ENCODE measurements at regions of chr1 and their contacts with region 1.

Region 1: GRCh38 chr1:77126307-77126706 is 92.9 kb downstream of the PIGK start:
- DNase-seq: peak; percentile 79
- ATAC-seq: peak; percentile 80
- H3K4me3 ChIP-seq: no peak overlapping the region
- H3K27ac ChIP-seq: no peak overlapping the region
- H3K4me1 ChIP-seq: 0 out of 2 replicates have a peak, but pooled peaks cover 4% of the 10 kb centered on the region
- H3K27me3 ChIP-seq: no peaks in the 10 kb centered on the region
- CTCF ChIP-seq: peak; percentile 88

Region 2: GRCh38 chr1:76154206-76154956 is 971.9 kb before region 1 on chr1:
- CTCF ChIA-PET with region 1: no interaction called
- POLR2A ChIA-PET with region 1: no interaction called
- intact Hi-C with region 1: loop called (anchors 1 kb)
- DNase-seq: peak; percentile 80
- ATAC-seq: peak; percentile 96
- H3K4me3 ChIP-seq: peak overlapping the region; percentile 65
- H3K27ac ChIP-seq: no peak overlapping the region
- H3K4me1 ChIP-seq: peaks cover 5% of the 10 kb centered on the region; the same call in 1 of the 2 replicates
- H3K27me3 ChIP-seq: peaks cover 40% of the 10 kb centered on the region
- CTCF ChIP-seq: peak; percentile 96

Region 3: DNA sequence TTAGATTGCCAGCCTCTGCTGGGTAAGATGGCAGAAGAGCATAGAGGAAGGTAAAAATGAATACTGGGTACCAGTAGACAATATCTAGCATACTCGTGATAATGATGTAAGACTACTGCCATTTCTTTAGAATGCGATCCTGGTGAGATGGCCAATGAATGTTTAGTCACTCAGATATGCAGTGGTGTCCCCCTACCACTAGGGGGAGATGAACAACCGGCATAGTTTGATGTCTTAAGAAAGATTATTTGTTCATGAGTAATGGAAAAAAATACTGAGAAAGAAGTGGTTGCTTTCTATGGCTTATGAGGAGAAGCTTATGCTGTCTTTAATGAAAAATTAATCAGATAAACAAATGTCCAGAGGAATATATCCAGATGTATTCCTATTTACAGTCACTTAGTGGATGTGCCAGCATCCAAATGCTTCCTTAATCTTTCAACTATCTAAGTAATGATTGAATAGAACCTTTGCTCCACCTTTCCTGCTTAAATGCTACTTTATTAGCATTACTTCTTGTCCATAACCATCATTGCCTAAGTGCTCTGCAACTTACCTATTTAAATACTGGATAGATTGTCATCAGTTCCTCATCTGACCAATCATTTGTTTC is 795.2 kb before region 1 on chr1:
- CTCF ChIA-PET with region 1: interaction called, 3 read pairs
- POLR2A ChIA-PET with region 1: no interaction called
- intact Hi-C with region 1: loop called (anchors 1 kb)
- DNase-seq: peak; percentile 78
- ATAC-seq: peak; percentile 78
- H3K4me3 ChIP-seq: no peak overlapping the region
- H3K27ac ChIP-seq: no peak overlapping the region
- H3K4me1 ChIP-seq: no peaks in the 10 kb centered on the region
- H3K27me3 ChIP-seq: no peaks in the 10 kb centered on the region
- CTCF ChIP-seq: peak; percentile 94

Region 4: GRCh38 chr1:76901158-76901767 is 225.0 kb before region 1 on chr1:
- CTCF ChIA-PET with region 1: no interaction called
- POLR2A ChIA-PET with region 1: no interaction called
- intact Hi-C with region 1: loop called (anchors 1 kb)
- DNase-seq: peak; percentile 76
- ATAC-seq: peak; percentile 88
- H3K4me3 ChIP-seq: no peak overlapping the region
- H3K27ac ChIP-seq: no peak overlapping the region
- H3K4me1 ChIP-seq: no peaks in the 10 kb centered on the region
- H3K27me3 ChIP-seq: no peaks in the 10 kb centered on the region
- CTCF ChIP-seq: peak; percentile 95

Region 5: DNA sequence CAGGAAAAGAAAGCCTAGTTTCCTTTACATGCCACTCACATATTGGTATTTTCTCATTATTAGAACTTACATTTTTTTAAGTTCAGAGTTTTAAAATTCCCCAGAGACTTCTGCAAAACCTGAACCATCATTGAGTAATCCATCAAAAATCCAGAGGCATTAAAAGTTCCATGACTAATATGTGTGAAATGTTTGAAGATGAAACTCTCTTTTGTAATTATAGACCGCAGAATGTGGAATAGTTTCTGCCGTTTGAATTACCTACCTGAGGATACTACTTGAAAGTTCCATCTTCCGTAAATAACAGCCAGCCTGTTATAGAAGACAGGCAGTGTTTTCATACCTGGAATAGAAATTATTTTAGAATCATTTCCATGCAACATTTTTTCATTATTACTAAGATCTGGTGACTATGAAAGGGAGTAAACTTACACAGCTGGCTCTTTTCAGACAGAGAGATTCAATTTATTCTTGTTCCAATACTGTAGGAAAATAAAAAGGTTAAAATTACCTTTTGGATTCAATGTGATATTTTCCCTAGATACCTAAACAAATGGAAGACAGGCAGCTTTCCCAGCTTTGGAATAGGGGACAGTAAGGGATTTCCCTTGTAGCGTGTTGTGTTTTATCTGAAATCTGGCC is 127.6 kb before region 1 on chr1:
- CTCF ChIA-PET with region 1: no interaction called
- POLR2A ChIA-PET with region 1: no interaction called
- intact Hi-C with region 1: loop called (anchors 2 kb)
- DNase-seq: peak; percentile 96
- ATAC-seq: peak; percentile 98
- H3K4me3 ChIP-seq: 0 out of 2 replicates have a peak overlapping the region, but pooled peaks have one; percentile 6
- H3K27ac ChIP-seq: peak overlapping the region; percentile 88
- H3K4me1 ChIP-seq: peaks cover 26% of the 10 kb centered on the region
- H3K27me3 ChIP-seq: no peaks in the 10 kb centered on the region
- CTCF ChIP-seq: no peak

Region 6: DNA sequence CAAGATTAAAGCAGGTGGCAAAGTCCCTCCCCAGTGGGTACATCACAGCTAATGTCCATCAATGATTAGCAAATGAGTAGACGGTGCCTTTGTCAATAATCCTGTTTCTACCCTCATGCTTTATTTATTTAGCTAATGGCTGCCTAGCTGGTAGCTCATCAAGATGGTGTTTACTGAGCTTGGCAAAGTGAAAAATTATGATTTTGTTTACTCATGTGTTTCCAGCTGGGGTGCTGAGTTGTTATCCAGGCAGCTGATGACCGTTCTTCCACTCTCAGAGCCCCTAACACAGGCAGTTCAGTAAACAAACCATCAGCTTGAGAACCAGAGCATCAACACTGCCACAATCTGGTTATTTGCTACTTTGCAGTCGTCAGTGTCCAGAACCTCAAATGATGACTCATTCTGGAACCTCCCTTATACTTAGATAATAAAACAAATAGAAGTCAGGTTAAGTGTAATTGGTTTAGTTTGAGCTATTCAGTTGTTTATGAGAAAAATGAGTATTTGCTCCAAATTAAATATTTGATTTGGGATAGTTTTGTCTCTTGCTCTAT is 95.1 kb before region 1 on chr1:
- CTCF ChIA-PET with region 1: interaction called, 3 read pairs
- POLR2A ChIA-PET with region 1: no interaction called
- intact Hi-C with region 1: loop called (anchors 2 kb)
- DNase-seq: peak; percentile 87
- ATAC-seq: peak; percentile 89
- H3K4me3 ChIP-seq: no peak overlapping the region
- H3K27ac ChIP-seq: peak overlapping the region; percentile 74
- H3K4me1 ChIP-seq: peaks cover 20% of the 10 kb centered on the region
- H3K27me3 ChIP-seq: no peaks in the 10 kb centered on the region
- CTCF ChIP-seq: peak; percentile 62

Region 7: DNA sequence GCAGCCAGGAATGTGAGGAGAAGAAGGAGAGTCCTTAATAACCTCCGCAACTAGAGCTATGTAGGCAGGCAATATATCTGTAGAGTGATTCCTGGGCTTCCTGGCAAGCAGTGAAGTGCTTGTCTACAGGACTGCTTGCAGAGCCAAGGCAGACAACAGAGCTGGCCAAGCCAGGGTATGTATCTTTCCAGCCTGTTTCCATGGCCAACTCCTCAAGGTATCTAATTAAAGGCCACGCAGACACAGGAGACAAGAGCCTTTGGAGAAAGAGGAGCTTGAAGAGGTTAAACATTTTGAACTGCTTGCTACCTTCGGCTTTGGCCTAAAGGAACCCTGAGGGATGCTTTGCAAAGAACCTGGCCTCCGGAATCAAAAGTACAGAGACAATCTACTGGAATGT is 44.5 kb before region 1 on chr1:
- CTCF ChIA-PET with region 1: no interaction called
- POLR2A ChIA-PET with region 1: no interaction called
- intact Hi-C with region 1: no loop called
- DNase-seq: no peak
- ATAC-seq: no peak
- H3K4me3 ChIP-seq: no peak overlapping the region
- H3K27ac ChIP-seq: no peak overlapping the region
- H3K4me1 ChIP-seq: no peaks in the 10 kb centered on the region
- H3K27me3 ChIP-seq: no peaks in the 10 kb centered on the region
- CTCF ChIP-seq: no peak

Measured in PC-3 (cell line).